Breast epithelium (tissue), 4 donors: ENCODE measurements at regions of chr5 and their contacts with region 1.

Region 1: GRCh38 chr5:164090358-164090757 is 584.9 kb downstream of the MAT2B start:
- DNase-seq: no peak
- H3K4me3 ChIP-seq: no peak overlapping the region
- H3K27ac ChIP-seq: no peak overlapping the region
- H3K4me1 ChIP-seq: no peaks in the 10 kb centered on the region
- H3K27me3 ChIP-seq: no peaks in the 10 kb centered on the region
- CTCF ChIP-seq: no peak
- POLR2A ChIP-seq: no peak

Region 2: DNA sequence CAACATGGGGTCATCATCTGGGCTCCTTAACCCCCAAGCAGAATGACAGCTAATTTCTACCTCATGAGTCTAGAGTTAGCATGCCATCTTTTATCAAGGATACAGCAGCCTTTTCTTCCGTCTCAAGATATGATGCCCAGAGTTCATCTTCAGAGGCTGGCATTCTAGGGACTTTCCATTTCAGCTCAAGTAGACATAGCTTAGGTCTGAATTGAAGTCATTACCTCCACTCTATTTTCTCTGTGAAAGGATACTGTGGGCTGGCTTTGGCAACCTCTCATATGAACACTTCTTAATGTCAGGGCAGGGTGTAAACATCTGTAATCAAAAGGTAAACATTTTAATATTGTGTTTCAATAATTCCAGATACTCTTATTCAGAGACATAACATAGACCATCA is 49.3 kb before region 1 on chr5:
- intact Hi-C with region 1: loop called (anchors 2 kb)
- DNase-seq: no peak
- H3K4me3 ChIP-seq: no peak overlapping the region
- H3K27ac ChIP-seq: no peak overlapping the region
- H3K4me1 ChIP-seq: no peaks in the 10 kb centered on the region
- H3K27me3 ChIP-seq: no peaks in the 10 kb centered on the region
- CTCF ChIP-seq: no peak
- POLR2A ChIP-seq: no peak